ENCODE measurements at regions of chr15 and their contacts with region 1.

Region 1: GRCh38 chr15:34342737-34343575 is at the starts of genes NOP10 and NUTM1:
- DNase-seq: peak; percentile 94 to 97
- ATAC-seq: peak; percentile 96
- H3K4me3 ChIP-seq: peak within 1 kb of the TSS; percentile 64 to 78
- H3K27ac ChIP-seq: peak within 1 kb of the TSS in 1 of 2 donors; percentile 50
- H3K4me1 ChIP-seq: no peaks in the 10 kb centered on the region
- H3K27me3 ChIP-seq: no peaks in the 10 kb centered on the region
- total RNA-seq, gene NOP10: 95.6 to 105 TPM
- total RNA-seq, gene NUTM1: not detected

Region 2: DNA sequence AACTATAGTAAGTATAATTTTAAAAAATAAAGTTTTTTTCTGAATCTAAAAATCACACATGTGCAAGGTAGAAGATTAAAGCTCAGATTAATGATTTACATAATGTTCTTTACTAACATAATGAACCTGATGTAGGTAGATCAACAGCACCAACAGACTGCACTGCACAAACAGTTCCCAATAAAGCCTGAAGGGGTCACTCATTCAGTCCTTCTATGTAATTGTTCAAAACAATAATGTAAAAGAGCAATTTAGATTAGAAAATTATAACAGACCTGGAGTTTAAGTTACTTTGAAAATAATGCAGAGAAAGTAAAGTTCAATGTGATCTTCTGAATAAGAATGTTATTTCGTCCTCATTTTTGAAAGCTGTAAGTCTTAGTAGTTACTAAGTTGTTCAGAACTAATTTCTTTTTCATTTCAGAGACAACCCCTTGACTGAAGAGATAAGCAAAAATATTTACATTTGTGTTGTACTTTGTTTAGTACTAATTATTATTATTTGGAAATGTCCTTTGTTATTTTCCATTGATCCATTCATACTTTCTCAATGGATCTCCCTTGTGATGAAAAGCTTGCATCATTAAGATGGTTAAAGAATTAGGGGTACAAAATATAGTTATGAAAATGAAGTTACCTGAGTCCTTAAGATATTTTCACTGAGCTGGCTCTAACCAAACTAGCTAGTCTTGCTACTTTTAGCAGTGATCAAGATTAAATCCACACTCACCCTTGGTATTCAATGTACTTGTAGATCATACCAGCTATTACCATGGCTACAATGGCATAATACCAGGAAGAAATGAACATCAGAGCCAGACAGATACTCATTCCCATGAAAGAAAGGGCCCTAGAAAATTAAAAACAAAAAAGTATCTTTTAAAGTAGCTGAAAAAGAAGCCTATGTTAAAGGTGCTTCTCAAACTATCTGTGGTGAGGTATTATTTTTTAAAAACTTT is 101.3 kb before region 1 on chr15:
- intact Hi-C with region 1: loop called in 1 of 2 experiments (anchors 5 kb)
- DNase-seq: no peak
- ATAC-seq: no peak
- H3K4me3 ChIP-seq: no peak overlapping the region
- H3K27ac ChIP-seq: no peak overlapping the region
- H3K4me1 ChIP-seq: no peaks in the 10 kb centered on the region
- H3K27me3 ChIP-seq: no peaks in the 10 kb centered on the region

Region 3: GRCh38 chr15:34367101-34368081 is 24.4 kb after region 1 on chr15 and contains the start of gene LPCAT4:
- intact Hi-C with region 1: loop called in 1 of 2 experiments (anchors 2 kb)
- DNase-seq: peak; percentile 93 to 96
- ATAC-seq: peak; percentile 95
- H3K4me3 ChIP-seq: peak within 1 kb of the TSS; percentile 72 to 86
- H3K27ac ChIP-seq: peak within 1 kb of the TSS; percentile 34 to 92
- H3K4me1 ChIP-seq: no peaks in the 10 kb centered on the region
- H3K27me3 ChIP-seq: no peaks in the 10 kb centered on the region
- total RNA-seq, gene LPCAT4: 32.1 to 78.6 TPM

Region 4: DNA sequence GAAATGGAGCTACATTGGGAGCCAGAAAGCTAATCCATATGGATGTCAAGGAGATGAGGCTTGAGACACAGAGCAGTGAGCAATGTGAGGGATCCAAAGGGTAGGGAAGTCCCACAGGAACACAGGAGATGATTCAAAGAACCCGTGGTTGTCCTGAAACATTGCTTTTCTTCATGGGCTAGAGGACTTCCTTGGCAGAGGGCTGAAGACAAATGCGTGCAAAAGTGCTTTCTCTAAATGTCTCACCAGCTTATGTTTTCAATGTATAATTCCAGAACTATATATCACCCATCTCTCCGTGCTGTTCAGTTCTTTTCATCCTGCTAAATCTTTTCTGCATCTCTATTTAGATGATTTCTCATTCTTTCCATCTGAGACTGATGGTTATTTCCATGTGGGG is 140.7 kb after region 1 on chr15:
- intact Hi-C with region 1: no loop called
- DNase-seq: no peak
- ATAC-seq: no peak
- H3K4me3 ChIP-seq: no peak overlapping the region
- H3K27ac ChIP-seq: no peak overlapping the region
- H3K4me1 ChIP-seq: no peaks in the 10 kb centered on the region
- H3K27me3 ChIP-seq: no peaks in the 10 kb centered on the region

Region 5: DNA sequence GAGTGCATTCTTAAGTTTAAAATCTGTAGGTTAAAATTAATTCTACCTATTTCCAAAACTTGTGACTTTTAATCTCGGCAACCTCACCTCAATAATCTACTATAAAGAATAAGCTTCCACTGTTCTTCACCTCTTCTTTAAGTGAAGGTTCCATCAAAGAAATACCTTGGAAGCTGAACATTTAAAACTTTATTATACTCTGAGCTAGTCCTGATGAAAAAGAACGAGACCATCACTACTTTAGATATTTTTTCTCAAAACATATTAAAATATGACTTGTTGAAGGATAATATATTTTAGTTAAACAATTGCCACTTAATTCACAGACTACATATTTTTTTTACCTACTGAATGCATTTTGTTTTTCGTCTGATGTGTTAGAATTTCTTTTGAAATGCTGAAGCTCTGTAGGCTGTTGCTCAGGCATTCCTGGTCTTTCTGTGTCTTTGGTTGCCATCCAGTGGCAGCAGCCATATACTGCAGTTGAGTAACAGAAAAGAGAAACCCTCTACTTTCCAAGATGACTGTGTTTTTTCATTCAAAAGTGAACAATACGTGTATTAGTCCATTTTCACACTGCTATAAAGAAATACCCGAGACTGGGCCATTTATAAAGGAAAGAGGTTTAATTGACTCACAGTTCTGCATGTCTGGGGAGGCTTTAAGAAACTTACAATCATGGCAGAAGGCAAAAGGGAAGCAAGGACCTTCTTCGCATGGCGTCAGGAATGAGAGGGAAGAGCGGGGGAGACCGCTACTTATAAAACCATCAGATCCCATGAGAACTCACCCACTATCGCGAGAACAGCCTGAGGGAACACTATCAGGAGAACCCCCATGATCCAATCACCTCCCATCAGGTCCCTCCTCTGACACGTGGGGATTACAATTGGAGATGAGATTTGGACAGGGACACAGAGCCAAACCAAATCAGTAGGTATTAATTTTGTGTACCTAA is 245.0 kb after region 1 on chr15:
- intact Hi-C with region 1: loop called in 1 of 2 experiments (anchors 10 kb)
- DNase-seq: peak in 1 of 2 donors; percentile 66
- ATAC-seq: peak; percentile 90
- H3K4me3 ChIP-seq: no peak overlapping the region
- H3K27ac ChIP-seq: no peak overlapping the region
- H3K4me1 ChIP-seq: no peaks in the 10 kb centered on the region
- H3K27me3 ChIP-seq: no peaks in the 10 kb centered on the region

Region 6: DNA sequence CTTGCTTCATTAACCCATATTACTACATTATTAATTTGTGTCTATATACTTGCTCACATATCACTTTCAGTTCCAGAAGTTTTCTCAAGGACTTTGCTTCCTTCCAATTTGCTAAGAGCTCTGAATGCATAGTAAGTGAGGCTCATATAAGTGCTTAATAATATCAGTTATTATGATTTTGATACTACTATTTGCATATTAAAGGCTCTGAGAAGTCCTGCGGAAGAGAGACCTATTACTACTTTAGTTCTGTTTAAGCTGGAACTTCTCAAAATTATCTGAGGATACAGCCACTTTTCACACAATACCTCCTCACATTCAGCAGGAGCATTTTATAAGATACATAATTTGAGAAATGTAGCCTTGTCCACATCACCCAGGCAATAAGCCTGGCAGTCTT is 330.3 kb after region 1 on chr15:
- intact Hi-C with region 1: no loop called
- DNase-seq: no peak
- ATAC-seq: no peak
- H3K4me3 ChIP-seq: no peak overlapping the region
- H3K27ac ChIP-seq: no peak overlapping the region
- H3K4me1 ChIP-seq: no peaks in the 10 kb centered on the region
- H3K27me3 ChIP-seq: no peaks in the 10 kb centered on the region

Measured in aorta (tissue), 5 donors.